CD14-positive monocyte (primary cell): ENCODE measurements at regions of chr9 and their contacts with region 1.

Region 1: DNA sequence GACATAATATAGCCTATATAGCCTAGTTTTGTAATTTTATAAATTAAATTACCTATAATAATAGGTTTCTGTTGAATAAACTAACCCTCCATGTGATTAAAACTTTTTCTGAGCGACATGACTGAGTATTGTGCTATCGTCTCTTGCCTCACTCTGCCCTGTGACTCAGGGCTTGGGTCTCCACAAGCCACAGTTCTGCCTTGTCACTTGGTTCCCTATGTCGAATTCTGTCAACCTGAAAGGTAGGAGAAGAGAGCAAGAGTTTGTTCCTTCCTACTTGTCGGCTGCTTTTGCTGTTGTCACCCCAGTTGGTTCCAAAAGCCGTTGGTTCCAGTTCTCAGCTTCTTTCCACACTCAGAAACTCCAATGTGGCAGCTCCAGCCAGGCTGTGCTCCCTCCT is 285.9 kb downstream of the PSAT1 start:
- DNase-seq: no peak
- H3K4me3 ChIP-seq: no peak overlapping the region
- H3K4me3 Mint-ChIP-seq: no peak overlapping the region
- H3K27ac ChIP-seq: no peak overlapping the region
- H3K27ac Mint-ChIP-seq: no peak overlapping the region
- H3K4me1 ChIP-seq: no peaks in the 10 kb centered on the region
- H3K4me1 Mint-ChIP-seq: no peaks in the 10 kb centered on the region
- H3K27me3 ChIP-seq: no peaks in the 10 kb centered on the region
- H3K27me3 Mint-ChIP-seq: no peaks in the 10 kb centered on the region
- CTCF ChIP-seq: no peak

Region 2: DNA sequence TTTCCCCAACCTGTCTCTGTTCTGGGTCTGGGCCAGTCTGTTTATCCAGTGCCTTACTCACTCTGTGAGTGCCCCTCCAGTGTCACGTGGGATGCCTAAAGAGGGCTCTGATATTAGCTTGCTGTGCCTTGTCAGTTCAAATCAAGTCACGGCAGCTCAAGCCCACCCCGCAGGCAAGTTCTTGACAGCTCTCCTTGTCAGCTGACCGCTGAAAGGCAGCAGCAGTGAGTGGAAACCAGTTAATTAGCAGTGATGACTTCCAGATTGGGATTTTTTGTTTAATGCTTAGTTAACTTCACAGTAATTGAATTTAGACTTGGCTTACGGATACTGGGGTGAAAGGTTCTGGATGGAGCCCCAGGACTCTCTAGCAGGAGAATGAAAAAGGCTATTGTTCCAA is 75.8 kb before region 1 on chr9:
- intact Hi-C with region 1: no loop called
- DNase-seq: no peak
- H3K4me3 ChIP-seq: no peak overlapping the region
- H3K4me3 Mint-ChIP-seq: no peak overlapping the region
- H3K27ac ChIP-seq: no peak overlapping the region
- H3K27ac Mint-ChIP-seq: no peak overlapping the region
- H3K4me1 ChIP-seq: no peaks in the 10 kb centered on the region
- H3K4me1 Mint-ChIP-seq: no peaks in the 10 kb centered on the region
- H3K27me3 ChIP-seq: no peaks in the 10 kb centered on the region
- H3K27me3 Mint-ChIP-seq: no peaks in the 10 kb centered on the region
- CTCF ChIP-seq: no peak

Region 3: DNA sequence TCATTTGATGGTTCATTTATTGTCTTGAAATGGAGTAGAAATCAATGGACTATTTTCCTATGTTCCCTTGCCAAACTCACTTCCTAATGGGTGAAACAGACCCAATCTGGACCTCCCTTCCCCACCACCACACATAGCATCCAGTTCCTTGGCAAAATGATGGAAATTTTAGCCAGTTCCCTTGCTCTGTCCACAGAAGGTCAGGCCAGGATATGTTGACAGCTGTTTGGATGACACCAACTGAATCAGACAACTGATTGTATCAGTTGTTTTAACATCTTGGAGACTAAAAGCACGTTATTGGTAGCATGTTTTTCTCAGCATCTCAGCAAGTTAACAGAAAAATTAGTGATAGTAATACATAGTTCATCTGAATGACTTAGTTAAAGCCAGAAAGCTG is 248.9 kb after region 1 on chr9:
- intact Hi-C with region 1: loop called in 1 of 2 experiments (anchors 5 kb)
- DNase-seq: no peak
- H3K4me3 ChIP-seq: no peak overlapping the region
- H3K4me3 Mint-ChIP-seq: no peak overlapping the region
- H3K27ac ChIP-seq: no peak overlapping the region
- H3K27ac Mint-ChIP-seq: no peak overlapping the region
- H3K4me1 ChIP-seq: no peaks in the 10 kb centered on the region
- H3K4me1 Mint-ChIP-seq: no peaks in the 10 kb centered on the region
- H3K27me3 ChIP-seq: no peaks in the 10 kb centered on the region
- H3K27me3 Mint-ChIP-seq: peaks cover 0 to 1% (median 0%) of the 10 kb centered on the region in 3 donors
- CTCF ChIP-seq: no peak